Calu3 (cell line): ENCODE measurements at regions of chr6 and their contacts with region 1.

Region 1: GRCh38 chr6:108417027-108417426 is 122.2 kb downstream of the AFG1L start:
- DNase-seq: no peak
- H3K4me3 Mint-ChIP-seq: no peak overlapping the region
- H3K27ac Mint-ChIP-seq: no peak overlapping the region
- H3K4me1 Mint-ChIP-seq: no peaks in the 10 kb centered on the region
- H3K27me3 Mint-ChIP-seq: no peaks in the 10 kb centered on the region
- CTCF ChIP-seq: no peak

Region 2: DNA sequence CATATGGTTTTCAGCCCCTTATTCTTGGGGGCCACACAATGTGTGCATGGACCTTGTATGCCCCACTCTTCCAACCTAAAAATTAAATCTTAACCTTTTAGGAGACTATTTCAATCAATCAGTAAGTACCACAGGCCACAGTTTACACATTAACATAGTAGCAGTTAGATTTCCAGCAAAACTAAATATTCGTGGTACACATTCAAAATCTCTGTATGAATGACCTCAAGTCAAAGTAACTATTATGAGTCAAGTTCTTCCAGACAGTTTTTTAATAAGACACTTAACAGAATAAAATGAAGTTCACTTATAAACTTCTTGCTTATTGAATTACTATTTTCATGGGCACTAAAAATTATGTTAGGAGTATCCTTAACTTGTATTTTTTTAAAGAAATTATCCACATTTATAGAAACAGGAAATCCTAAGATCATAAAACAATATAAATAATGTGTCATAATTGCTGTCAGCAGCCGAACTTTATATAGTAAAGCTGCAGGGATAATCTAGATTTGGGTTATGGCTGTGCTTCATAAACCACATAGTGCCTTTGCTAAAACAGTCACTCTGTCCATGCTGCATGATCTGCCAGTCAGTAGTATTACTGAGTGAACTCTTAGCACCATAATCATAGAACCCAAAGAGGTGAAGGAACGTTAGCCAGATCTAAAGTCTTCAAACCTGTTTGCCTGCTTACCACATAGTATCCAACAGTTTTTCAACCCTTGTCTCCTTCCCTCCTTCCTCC is 480.7 kb before region 1 on chr6:
- CTCF ChIA-PET with region 1: no interaction called
- intact Hi-C with region 1: no loop called
- DNase-seq: no peak
- H3K4me3 Mint-ChIP-seq: no peak overlapping the region
- H3K27ac Mint-ChIP-seq: no peak overlapping the region
- H3K4me1 Mint-ChIP-seq: peaks cover 17% of the 10 kb centered on the region
- H3K27me3 Mint-ChIP-seq: no peaks in the 10 kb centered on the region
- CTCF ChIP-seq: no peak

Region 3: GRCh38 chr6:108163267-108163643 is 253.8 kb before region 1 on chr6:
- CTCF ChIA-PET with region 1: no interaction called
- intact Hi-C with region 1: no loop called
- DNase-seq: no peak
- H3K4me3 Mint-ChIP-seq: no peak overlapping the region
- H3K27ac Mint-ChIP-seq: no peak overlapping the region
- H3K4me1 Mint-ChIP-seq: no peaks in the 10 kb centered on the region
- H3K27me3 Mint-ChIP-seq: peaks cover 94% of the 10 kb centered on the region
- CTCF ChIP-seq: no peak

Region 4: GRCh38 chr6:108464418-108465093 is 47.5 kb after region 1 on chr6:
- CTCF ChIA-PET with region 1: no interaction called
- intact Hi-C with region 1: loop called (anchors 10 kb)
- DNase-seq: no peak
- H3K4me3 Mint-ChIP-seq: no peak overlapping the region
- H3K27ac Mint-ChIP-seq: no peak overlapping the region
- H3K4me1 Mint-ChIP-seq: no peaks in the 10 kb centered on the region
- H3K27me3 Mint-ChIP-seq: no peaks in the 10 kb centered on the region
- CTCF ChIP-seq: no peak